Psoas muscle (tissue), 8 donors: ENCODE measurements at regions of chr2 and their contacts with region 1.

Region 1: GRCh38 chr2:225282858-225283710 is 116.4 kb upstream of the NYAP2 start:
- DNase-seq: no peak
- ATAC-seq: no peak
- H3K4me3 ChIP-seq: no peak overlapping the region
- H3K27ac ChIP-seq: no peak overlapping the region
- H3K4me1 ChIP-seq: no peaks in the 10 kb centered on the region
- H3K27me3 ChIP-seq: peaks cover 0 to 1% (median 0%) of the 10 kb centered on the region in 3 donors
- CTCF ChIP-seq: peak; percentile 30

Region 2: DNA sequence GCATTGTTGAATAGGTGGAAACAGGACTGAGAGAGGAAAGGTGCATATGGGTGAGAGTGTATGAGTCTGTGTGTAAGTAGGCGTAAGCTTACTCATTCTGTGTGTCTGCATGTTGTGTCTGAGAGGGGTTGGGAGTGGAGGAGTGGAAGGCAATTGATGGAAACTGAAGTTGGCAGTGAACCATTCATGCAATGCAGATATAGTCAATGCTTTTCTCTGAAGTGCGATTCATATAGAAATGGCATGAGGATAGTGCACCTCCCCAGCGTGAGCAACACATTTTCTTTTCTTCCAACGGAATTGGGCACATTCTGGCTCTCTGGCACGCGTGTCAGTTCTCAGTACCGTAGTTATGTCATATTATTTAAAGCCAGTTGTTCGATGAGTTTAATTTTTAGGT is 367.0 kb after region 1 on chr2:
- intact Hi-C with region 1: loop called in 1 of 2 experiments (anchors 10 kb)
- DNase-seq: no peak
- ATAC-seq: no peak
- H3K4me3 ChIP-seq: no peak overlapping the region
- H3K27ac ChIP-seq: no peak overlapping the region
- H3K4me1 ChIP-seq: no peaks in the 10 kb centered on the region
- H3K27me3 ChIP-seq: no peaks in the 10 kb centered on the region
- CTCF ChIP-seq: no peak